ENCODE measurements at regions of chr16 and their contacts with region 1.

Region 1: DNA sequence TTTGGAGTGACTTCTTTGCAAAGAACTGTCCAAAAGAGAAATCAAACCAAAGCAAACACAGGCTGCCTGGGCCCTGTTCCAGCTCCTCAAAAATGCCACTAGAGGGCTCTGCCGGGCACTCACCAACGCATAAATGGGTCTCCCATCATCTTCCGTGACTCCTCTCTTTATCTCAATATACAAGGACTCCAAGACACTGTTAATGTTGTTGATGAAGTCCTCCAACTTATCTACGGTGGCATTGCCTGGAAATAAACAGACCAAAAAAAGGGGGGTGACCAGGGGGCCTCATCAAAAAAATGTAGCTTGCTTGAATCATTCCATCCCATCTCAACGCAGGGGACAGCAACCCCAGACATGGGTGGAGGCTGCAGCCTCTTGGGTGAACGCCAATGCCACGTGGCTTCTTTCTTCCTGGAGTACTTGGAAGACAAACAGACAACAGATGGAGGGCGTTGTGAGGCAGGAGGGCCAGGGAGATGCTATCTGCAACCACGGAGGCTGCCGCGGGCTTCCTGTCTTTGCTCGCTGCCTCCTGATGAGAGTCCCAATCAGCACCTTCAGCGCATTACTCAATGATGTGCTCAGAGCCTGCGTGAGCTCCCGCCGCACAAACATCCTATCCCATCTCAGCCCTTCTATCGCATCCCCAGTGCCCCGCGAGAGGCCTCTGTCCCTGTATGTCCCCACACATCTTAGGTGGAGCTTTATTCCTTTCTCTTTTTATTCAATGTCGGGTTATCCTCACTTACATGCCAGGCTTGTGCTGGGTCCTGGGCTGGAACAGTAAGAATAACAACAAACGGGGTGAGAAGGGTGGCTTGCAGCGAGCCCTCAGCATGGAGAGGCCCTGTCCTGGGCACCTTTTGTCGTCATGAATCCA is 32.0 kb downstream of the KDM8 start:
- DNase-seq: peak; percentile 82 to 97 (median 91)
- ATAC-seq: peak; percentile 71 to 80 (median 72)
- H3K4me3 ChIP-seq: peak overlapping the region; percentile 5 to 11
- H3K4me3 Mint-ChIP-seq: peak overlapping the region; percentile 69 to 85 (median 71)
- H3K27ac ChIP-seq: peak overlapping the region; percentile 98
- H3K27ac Mint-ChIP-seq: peak overlapping the region; percentile 97 to 99
- H3K4me1 ChIP-seq: peaks cover 70 to 94% of the 10 kb centered on the region in 2 experiments
- H3K4me1 Mint-ChIP-seq: peaks cover 95 to 98% (median 98%) of the 10 kb centered on the region in 3 donors
- H3K27me3 ChIP-seq: no peaks in the 10 kb centered on the region
- H3K27me3 Mint-ChIP-seq: no peaks in the 10 kb centered on the region

Region 2: DNA sequence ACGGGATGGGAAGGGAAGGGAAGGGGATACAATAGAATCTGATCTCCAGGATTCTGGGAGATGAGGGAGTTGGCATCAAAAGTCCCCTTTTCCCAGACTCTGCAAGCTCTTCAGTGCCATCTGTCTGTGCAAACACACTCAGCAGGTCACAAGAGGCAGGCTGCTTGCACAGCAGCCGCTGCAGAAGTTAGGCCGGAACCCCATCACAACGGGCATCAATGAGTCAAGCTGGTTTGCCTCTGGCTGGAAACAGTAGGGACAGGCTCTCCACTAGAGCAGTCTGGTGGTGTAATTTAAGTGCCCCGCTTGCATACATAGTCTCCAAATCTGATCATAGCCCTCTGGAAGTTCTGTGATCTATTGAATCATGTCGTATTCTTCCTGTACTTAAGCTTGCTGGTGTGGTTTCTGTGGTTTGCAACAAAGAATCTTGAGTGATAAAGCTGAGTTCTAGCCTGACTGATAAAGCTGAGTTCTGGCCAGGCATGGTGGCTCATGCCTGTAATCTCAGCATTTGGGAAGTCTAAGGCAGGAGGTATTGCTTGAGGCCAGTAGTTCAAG is 65.7 kb before region 1 on chr16:
- CTCF ChIA-PET with region 1: interaction called in 1 of 2 experiments, 13 read pairs
- POLR2A ChIA-PET with region 1: interaction called, 3 to 12 read pairs
- DNase-seq: peak; percentile 28 to 89 (median 74)
- ATAC-seq: peak; percentile 83 to 93 (median 85)
- H3K4me3 ChIP-seq: peak overlapping the region; percentile 8 to 11
- H3K4me3 Mint-ChIP-seq: peak overlapping the region; percentile 7 to 43 (median 18)
- H3K27ac ChIP-seq: peak overlapping the region; percentile 40
- H3K27ac Mint-ChIP-seq: peak overlapping the region; percentile 45 to 88
- H3K4me1 ChIP-seq: peaks cover 31 to 65% of the 10 kb centered on the region in 2 experiments
- H3K4me1 Mint-ChIP-seq: peaks cover 72 to 78% (median 73%) of the 10 kb centered on the region in 3 donors
- H3K27me3 ChIP-seq: no peaks in the 10 kb centered on the region
- H3K27me3 Mint-ChIP-seq: no peaks in the 10 kb centered on the region

Region 3: GRCh38 chr16:27179500-27180072 is 55.7 kb before region 1 on chr16:
- CTCF ChIA-PET with region 1: interaction called, 5 to 23 read pairs
- POLR2A ChIA-PET with region 1: no interaction called
- DNase-seq: peak; percentile 72 to 92 (median 85)
- ATAC-seq: peak; percentile 94 to 98 (median 96)
- H3K4me3 ChIP-seq: no peak overlapping the region
- H3K4me3 Mint-ChIP-seq: peak overlapping the region in 1 of 3 donors; percentile 24
- H3K27ac ChIP-seq: no peak overlapping the region
- H3K27ac Mint-ChIP-seq: peak overlapping the region; percentile 74 to 88
- H3K4me1 ChIP-seq: peaks cover 17 to 27% of the 10 kb centered on the region in 2 experiments
- H3K4me1 Mint-ChIP-seq: peaks cover 30 to 50% (median 33%) of the 10 kb centered on the region in 3 donors
- H3K27me3 ChIP-seq: no peaks in the 10 kb centered on the region
- H3K27me3 Mint-ChIP-seq: no peaks in the 10 kb centered on the region

Region 4: DNA sequence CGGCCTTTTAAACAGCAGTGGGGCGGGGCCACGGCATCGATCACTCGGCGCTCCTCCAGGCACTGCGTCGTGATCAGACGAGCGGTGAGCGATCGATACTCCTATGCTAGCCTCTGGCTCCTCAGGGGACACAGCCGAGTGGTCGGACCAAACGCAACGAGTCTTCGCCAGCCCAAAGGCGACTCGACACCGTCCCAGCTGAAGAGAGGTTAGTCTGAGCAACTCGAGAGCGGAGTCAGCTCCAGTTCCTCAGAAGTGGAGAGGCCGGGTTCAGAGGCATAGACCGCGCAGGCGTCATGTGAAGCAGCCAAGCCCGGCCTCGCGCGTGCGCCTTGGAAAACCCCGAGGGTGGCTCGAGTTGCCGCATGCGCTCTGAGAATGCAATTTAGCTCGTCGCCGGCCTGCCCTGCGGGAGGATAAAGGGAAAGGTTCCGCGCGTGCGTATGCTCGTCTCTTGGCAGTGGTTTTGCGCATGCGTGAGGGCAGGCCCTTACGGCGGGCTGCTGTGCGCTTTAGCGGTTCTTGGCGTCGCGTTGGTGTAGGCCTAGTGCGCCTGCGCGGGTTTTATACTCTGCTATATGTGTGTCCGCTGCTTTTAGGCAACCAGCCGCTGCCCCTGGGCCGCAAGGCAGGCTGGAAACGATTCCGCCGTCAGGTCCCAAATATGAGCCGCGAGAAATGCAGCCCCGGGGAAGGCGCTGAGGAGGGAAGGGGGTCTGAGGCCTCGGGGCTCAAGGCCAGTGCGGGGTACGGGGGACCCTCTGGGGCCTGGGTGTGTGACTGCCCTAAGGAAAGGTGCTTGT is 31.7 kb before region 1 on chr16 and contains the start of gene KDM8:
- CTCF ChIA-PET with region 1: interaction called in 1 of 2 experiments, 11 read pairs
- POLR2A ChIA-PET with region 1: interaction called, 4 to 5 read pairs
- DNase-seq: peak; percentile 98 to 100 (median 100)
- ATAC-seq: peak; percentile 77 to 82 (median 82)
- H3K4me3 ChIP-seq: peak within 1 kb of the TSS; percentile 76 to 83
- H3K4me3 Mint-ChIP-seq: peak within 1 kb of the TSS; percentile 85 to 97 (median 96)
- H3K27ac ChIP-seq: peak within 1 kb of the TSS; percentile 97
- H3K27ac Mint-ChIP-seq: peak within 1 kb of the TSS; percentile 100
- H3K4me1 ChIP-seq: peaks cover 37 to 53% of the 10 kb centered on the region in 2 experiments
- H3K4me1 Mint-ChIP-seq: peaks cover 51 to 62% (median 53%) of the 10 kb centered on the region in 3 donors
- H3K27me3 ChIP-seq: no peaks in the 10 kb centered on the region
- H3K27me3 Mint-ChIP-seq: no peaks in the 10 kb centered on the region
- total RNA-seq, gene KDM8: 13.4 to 25.6 (median 23.5) TPM

Region 5: DNA sequence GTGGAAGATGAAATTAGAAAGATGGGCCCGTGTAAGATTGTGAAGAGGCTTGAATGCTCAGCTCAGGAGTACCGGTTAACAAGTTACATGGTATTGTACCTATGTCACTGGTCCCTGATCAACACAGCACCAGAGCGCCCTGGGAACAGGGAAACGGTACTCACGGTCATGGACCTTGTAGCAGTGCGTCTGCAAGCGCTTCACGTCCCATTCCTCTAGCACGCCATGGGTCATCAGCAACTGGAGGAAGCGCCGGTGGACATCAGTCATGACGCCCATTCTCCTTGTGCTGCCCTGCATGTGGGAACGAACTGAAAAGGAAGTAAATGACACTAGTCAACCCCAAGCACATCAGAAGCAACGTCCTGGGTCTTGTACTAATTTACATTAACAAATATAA is 22.0 kb after region 1 on chr16:
- CTCF ChIA-PET with region 1: interaction called in 1 of 2 experiments, 6 read pairs
- POLR2A ChIA-PET with region 1: interaction called in 1 of 2 experiments, 11 read pairs
- DNase-seq: no peak
- ATAC-seq: no peak
- H3K4me3 ChIP-seq: no peak overlapping the region
- H3K4me3 Mint-ChIP-seq: no peak overlapping the region
- H3K27ac ChIP-seq: no peak overlapping the region
- H3K27ac Mint-ChIP-seq: no peak overlapping the region
- H3K4me1 ChIP-seq: peaks cover 25 to 29% of the 10 kb centered on the region in 2 experiments
- H3K4me1 Mint-ChIP-seq: peaks cover 73 to 80% (median 76%) of the 10 kb centered on the region in 3 donors
- H3K27me3 ChIP-seq: no peaks in the 10 kb centered on the region
- H3K27me3 Mint-ChIP-seq: no peaks in the 10 kb centered on the region

Region 6: DNA sequence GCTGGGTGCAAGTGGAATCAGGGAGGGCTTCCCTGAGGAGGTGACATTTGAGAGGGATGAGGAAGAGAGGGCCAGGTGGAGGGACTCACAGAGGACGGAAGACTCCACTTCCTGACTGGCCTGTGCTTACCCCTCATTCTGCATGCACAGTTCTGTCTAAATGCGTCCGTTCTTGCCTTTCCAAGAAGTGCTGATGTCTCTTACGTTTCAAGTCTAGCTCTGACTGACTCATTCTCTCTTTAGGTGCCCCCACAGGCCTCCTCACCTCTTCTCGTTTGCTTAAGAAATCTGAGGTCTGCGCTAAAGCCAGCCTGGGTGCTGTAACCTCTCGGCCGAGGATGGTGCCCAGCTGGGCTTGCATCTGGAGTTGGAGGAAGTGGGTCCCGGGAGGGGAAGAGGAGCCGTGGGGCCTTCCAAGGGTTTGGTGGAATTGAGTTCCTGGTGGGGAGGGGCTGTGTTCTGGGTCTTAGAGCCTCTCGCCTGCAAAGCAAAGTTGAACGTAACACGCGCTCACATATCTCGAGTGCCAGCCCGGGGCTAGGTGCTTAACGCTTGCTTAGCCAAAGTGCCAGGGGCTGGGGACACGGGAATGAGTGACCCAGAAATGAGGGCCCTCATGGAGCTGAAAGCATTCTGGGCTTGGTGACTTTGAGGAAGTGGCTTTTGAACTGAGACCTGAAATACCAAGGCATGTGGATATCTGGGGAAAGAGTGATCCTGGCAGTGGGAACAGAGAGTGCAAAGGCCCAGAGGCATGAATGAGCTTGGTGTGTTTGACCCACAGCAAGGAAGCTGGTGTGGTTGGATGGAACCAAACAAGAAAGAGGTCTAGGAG is 83.3 kb after region 1 on chr16:
- CTCF ChIA-PET with region 1: interaction called in 1 of 2 experiments, 27 read pairs
- POLR2A ChIA-PET with region 1: interaction called, 4 to 7 read pairs
- DNase-seq: peak in 33 of 35 experiments; percentile 12 to 66 (median 37)
- ATAC-seq: peak; percentile 70 to 72 (median 70)
- H3K4me3 ChIP-seq: peak overlapping the region; percentile 18 to 42
- H3K4me3 Mint-ChIP-seq: peak overlapping the region; percentile 85 to 100 (median 94)
- H3K27ac ChIP-seq: peak overlapping the region; percentile 94
- H3K27ac Mint-ChIP-seq: peak overlapping the region; percentile 94 to 99
- H3K4me1 ChIP-seq: peaks cover 26 to 86% of the 10 kb centered on the region in 2 experiments
- H3K4me1 Mint-ChIP-seq: peaks cover 84 to 88% (median 87%) of the 10 kb centered on the region in 3 donors
- H3K27me3 ChIP-seq: no peaks in the 10 kb centered on the region
- H3K27me3 Mint-ChIP-seq: no peaks in the 10 kb centered on the region

Region 7: GRCh38 chr16:27367461-27368357 is 132.4 kb after region 1 on chr16:
- CTCF ChIA-PET with region 1: interaction called, 4 to 26 read pairs
- POLR2A ChIA-PET with region 1: interaction called, 3 to 6 read pairs
- DNase-seq: peak; percentile 62 to 97 (median 93)
- ATAC-seq: peak; percentile 77 to 85 (median 79)
- H3K4me3 ChIP-seq: peak overlapping the region; percentile 0 to 23
- H3K4me3 Mint-ChIP-seq: peak overlapping the region; percentile 51 to 66 (median 57)
- H3K27ac ChIP-seq: peak overlapping the region; percentile 100
- H3K27ac Mint-ChIP-seq: peak overlapping the region; percentile 94 to 95
- H3K4me1 ChIP-seq: peaks cover 27 to 70% of the 10 kb centered on the region in 2 experiments
- H3K4me1 Mint-ChIP-seq: peaks cover 59 to 76% (median 66%) of the 10 kb centered on the region in 3 donors
- H3K27me3 ChIP-seq: no peaks in the 10 kb centered on the region
- H3K27me3 Mint-ChIP-seq: no peaks in the 10 kb centered on the region

Measured in T-cell (primary cell).